ENCODE measurements at regions of chr1 and their contacts with region 1.

Region 1: DNA sequence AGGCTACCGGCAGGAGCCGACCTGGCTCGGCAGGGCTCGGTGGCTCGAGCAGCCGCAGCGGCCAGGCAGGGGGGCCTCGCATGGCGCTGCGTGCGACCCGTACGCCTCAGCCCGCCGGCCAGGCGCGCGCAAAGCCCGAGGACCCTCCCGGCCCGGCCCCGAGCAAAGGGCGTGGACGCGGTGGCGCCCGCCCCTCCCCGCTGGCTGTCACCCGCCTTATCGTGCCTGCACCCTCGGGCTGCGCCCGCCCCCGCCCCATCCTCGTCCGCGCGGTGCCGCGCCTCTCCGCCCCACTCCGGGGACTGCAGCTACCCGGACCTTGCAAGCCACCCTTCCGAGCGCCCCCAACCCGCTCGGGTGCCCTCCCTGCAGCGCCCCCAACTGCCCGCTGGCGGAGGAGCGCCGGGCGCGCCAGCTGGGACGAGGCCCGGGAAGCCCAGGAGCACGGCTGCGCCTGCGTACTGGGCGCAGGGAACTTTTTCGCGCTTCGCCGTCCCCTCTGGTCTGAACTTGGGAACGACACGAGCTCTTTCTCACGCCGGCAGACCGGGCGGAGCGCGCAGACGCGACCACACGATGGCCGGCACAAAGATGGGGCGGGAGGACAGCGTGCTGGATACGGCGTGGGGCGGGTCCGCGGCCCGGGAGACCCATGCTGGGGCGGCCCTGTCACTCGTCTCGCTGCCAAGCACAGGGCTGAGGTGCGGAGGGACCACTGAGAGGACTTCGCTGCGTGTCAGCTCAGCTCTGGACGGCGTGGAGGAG is at the start of gene ABCB10:
- DNase-seq: peak; percentile 96
- H3K4me3 Mint-ChIP-seq: peak within 1 kb of the TSS; percentile 90
- H3K27ac Mint-ChIP-seq: peak within 1 kb of the TSS; percentile 92
- H3K4me1 Mint-ChIP-seq: peaks cover 24% of the 10 kb centered on the region
- H3K27me3 Mint-ChIP-seq: no peaks in the 10 kb centered on the region
- total RNA-seq, gene ABCB10: 46.5 and 49.7 TPM in 2 replicates

Region 2: DNA sequence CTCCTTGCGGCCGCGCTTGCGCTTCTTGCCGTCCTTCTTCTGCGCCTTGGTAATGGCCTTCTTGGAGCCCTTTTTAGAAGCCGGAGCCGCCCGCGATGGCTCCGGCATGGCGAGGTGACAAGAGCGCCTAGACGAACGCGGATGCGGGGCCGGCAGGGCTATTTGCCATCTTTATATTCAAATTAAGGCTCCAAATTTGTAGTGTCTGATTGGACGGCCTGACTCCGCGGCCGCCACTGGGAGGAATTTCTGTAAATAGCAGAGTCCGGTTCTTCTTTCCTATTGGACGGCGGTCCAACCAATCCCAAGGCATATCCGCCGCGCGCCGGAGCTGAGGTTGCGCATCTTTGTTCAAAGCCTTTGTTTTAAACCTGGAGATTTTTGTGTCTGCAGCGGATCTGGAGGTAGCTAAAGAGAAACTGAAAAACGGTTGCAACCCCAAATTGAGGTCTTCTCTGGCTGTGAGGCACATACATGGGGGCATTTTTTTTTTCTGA is 1094.2 kb before region 1 on chr1:
- intact Hi-C with region 1: loop called (anchors 5 kb)
- DNase-seq: peak; percentile 97
- H3K4me3 Mint-ChIP-seq: peak overlapping the region; percentile 87
- H3K27ac Mint-ChIP-seq: peak overlapping the region; percentile 88
- H3K4me1 Mint-ChIP-seq: peaks cover 50% of the 10 kb centered on the region
- H3K27me3 Mint-ChIP-seq: peaks cover 12% of the 10 kb centered on the region

Region 3: GRCh38 chr1:229410692-229411443 is 147.9 kb before region 1 on chr1:
- intact Hi-C with region 1: no loop called
- DNase-seq: peak; percentile 60
- H3K4me3 Mint-ChIP-seq: peak overlapping the region; percentile 55
- H3K27ac Mint-ChIP-seq: no peak overlapping the region
- H3K4me1 Mint-ChIP-seq: peaks cover 15% of the 10 kb centered on the region
- H3K27me3 Mint-ChIP-seq: peaks cover 66% of the 10 kb centered on the region

Region 4: DNA sequence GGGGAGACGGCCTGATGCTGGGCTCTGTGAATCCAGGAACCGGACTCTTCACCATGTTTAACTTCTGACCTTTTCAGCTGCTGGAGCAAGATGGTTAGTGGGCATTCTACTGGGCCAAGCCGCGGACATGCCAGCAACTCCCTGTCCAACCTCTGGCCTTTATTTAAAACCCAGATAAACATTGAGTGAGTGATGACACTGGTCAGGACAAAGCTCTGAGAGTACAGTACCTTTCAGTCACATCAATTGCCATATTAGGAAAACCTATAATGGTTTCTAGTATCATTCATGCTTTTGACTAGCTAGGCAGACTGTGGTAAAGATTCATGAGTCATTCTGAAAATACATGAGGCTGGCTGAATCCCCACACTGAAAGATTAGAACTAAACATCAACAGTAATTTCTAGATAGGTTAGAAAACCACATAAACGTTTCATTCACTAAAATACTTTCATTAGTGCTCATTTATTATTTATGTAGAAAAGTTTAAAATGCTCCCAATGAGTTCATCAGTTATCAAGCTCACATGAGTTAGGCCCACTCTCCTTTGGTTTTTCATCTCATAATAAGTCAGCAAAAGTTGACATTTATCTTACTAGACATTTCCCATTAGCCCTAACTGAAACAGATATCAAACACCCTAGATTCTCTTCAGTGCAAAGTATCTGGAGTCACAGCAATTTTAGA is 117.8 kb before region 1 on chr1:
- intact Hi-C with region 1: loop called (anchors 2 kb)
- DNase-seq: peak; percentile 77
- H3K4me3 Mint-ChIP-seq: peak overlapping the region; percentile 52
- H3K27ac Mint-ChIP-seq: peak overlapping the region; percentile 81
- H3K4me1 Mint-ChIP-seq: peaks cover 24% of the 10 kb centered on the region
- H3K27me3 Mint-ChIP-seq: peaks cover 17% of the 10 kb centered on the region

Region 5: DNA sequence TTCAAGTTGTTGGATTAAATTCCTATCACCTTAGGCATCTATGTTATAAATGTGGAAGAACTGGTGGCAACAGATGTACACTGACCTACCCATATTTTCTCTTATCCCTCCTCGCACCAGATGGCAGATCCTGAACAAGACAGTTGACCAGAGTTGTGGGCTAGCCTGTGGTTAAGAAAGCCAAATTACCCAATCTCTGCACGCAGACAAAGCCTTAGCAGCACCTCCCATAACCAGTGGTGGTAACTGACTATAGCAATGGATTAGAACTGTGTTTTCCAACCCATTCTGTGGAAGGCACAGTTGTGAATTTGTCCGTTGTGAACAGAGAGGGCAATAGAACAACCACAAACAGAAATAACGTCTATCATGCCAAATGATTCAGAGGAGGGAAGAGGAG is 20.9 kb before region 1 on chr1:
- intact Hi-C with region 1: loop called (anchors 2 kb)
- DNase-seq: no peak
- H3K4me3 Mint-ChIP-seq: no peak overlapping the region
- H3K27ac Mint-ChIP-seq: peak overlapping the region; percentile 16
- H3K4me1 Mint-ChIP-seq: peaks cover 12% of the 10 kb centered on the region
- H3K27me3 Mint-ChIP-seq: no peaks in the 10 kb centered on the region

Region 6: GRCh38 chr1:229607370-229607769 is 48.6 kb after region 1 on chr1:
- intact Hi-C with region 1: no loop called
- DNase-seq: no peak
- H3K4me3 Mint-ChIP-seq: no peak overlapping the region
- H3K27ac Mint-ChIP-seq: no peak overlapping the region
- H3K4me1 Mint-ChIP-seq: peaks cover 4% of the 10 kb centered on the region
- H3K27me3 Mint-ChIP-seq: no peaks in the 10 kb centered on the region

Region 7: GRCh38 chr1:230310381-230311163 is 751.8 kb after region 1 on chr1:
- intact Hi-C with region 1: loop called (anchors 5 kb)
- DNase-seq: peak; percentile 86
- H3K4me3 Mint-ChIP-seq: no peak overlapping the region
- H3K27ac Mint-ChIP-seq: no peak overlapping the region
- H3K4me1 Mint-ChIP-seq: peaks cover 10% of the 10 kb centered on the region
- H3K27me3 Mint-ChIP-seq: peaks cover 10% of the 10 kb centered on the region

Measured in activated CD4-positive, alpha-beta T cell treated with anti-CD3 and anti-CD28 coated beads, Interleukin-2, amount 10 ng/mL, durations not matched to agents 24 days and 14 days (primary cell).